ENCODE measurements at regions of chr7 and their contacts with region 1.

Region 1: GRCh38 chr7:2037808-2038522 is 194.8 kb downstream of the MAD1L1 start:
- DNase-seq: peak in 4 of 9 experiments; percentile 30 to 71 (median 54)
- ATAC-seq: peak; percentile 36
- H3K4me3 ChIP-seq: peak overlapping the region; percentile 49 to 70
- H3K4me3 Mint-ChIP-seq: peak overlapping the region; percentile 89
- H3K27ac ChIP-seq: peak overlapping the region; percentile 55 to 66
- H3K27ac Mint-ChIP-seq: peak overlapping the region; percentile 97
- H3K4me1 ChIP-seq: peaks cover 38% of the 10 kb centered on the region
- H3K4me1 Mint-ChIP-seq: peaks cover 60% of the 10 kb centered on the region
- H3K27me3 ChIP-seq: no peaks in the 10 kb centered on the region
- H3K27me3 Mint-ChIP-seq: no peaks in the 10 kb centered on the region
- CTCF ChIP-seq: no peak

Region 2: GRCh38 chr7:1925349-1925748 is 112.6 kb before region 1 on chr7:
- CTCF ChIA-PET with region 1: interaction called, 3 read pairs
- POLR2A ChIA-PET with region 1: no interaction called
- intact Hi-C with region 1: loop called (anchors 1 to 2 kb)
- DNase-seq: peak in 3 of 9 experiments; percentile 28 to 38 (median 36)
- ATAC-seq: no peak
- H3K4me3 ChIP-seq: no peak overlapping the region
- H3K4me3 Mint-ChIP-seq: peak overlapping the region; percentile 64
- H3K27ac ChIP-seq: peak overlapping the region; percentile 51 to 56
- H3K27ac Mint-ChIP-seq: peak overlapping the region; percentile 89
- H3K4me1 ChIP-seq: peaks cover 82% of the 10 kb centered on the region
- H3K4me1 Mint-ChIP-seq: peaks cover 77% of the 10 kb centered on the region
- H3K27me3 ChIP-seq: no peaks in the 10 kb centered on the region
- H3K27me3 Mint-ChIP-seq: no peaks in the 10 kb centered on the region
- CTCF ChIP-seq: no peak

Region 3: DNA sequence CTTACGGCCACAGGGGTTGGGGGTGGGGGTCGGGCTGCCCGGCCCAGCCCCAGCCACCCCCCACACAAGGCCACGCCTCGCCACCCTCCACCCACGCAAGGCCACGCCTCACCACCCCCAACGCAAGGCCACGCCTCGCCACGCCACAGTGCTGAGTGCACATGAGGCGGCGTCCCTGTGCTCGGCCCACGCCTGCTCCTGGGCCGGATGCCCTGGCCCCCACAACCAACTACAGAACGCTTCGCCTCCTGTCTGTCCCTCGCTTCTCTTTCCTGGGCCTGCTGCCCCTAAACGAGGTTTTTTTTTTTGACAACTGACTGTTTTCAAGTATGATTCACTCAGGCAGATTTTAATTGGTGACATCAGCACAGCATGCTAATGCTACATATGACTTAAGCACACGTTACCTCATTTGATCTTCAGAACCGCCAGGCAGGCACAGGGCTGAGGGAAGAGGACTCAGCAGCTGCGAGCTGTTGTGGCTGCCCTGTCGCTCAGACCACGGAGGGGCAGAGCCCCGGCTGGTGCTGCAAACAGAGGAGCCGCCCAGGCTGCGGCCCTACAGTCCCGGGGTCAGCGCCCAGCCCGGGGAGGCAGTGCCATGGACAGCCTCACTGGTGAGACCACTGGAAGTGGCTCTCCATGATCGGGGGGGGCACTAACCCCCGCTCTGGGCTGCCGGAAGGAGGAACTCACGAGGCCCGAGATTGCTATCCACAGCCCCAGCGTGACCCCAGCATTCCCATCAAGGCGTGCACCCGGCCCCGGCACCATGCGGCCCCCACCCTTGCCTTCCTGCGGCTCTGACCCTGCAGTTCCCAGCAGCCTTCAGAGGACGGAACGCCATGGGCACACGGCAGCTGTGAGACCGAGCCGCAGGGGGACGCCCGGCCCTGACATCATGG is 18.1 kb before region 1 on chr7:
- CTCF ChIA-PET with region 1: no interaction called
- POLR2A ChIA-PET with region 1: no interaction called
- intact Hi-C with region 1: loop called in 1 of 2 experiments (anchors 1 kb)
- DNase-seq: peak in 6 of 9 experiments; percentile 25 to 81 (median 64)
- ATAC-seq: peak; percentile 92
- H3K4me3 ChIP-seq: peak overlapping the region; percentile 19 to 26
- H3K4me3 Mint-ChIP-seq: peak overlapping the region; percentile 69
- H3K27ac ChIP-seq: peak overlapping the region in 1 of 2 experiments; percentile 18
- H3K27ac Mint-ChIP-seq: peak overlapping the region; percentile 81
- H3K4me1 ChIP-seq: peaks cover 19% of the 10 kb centered on the region
- H3K4me1 Mint-ChIP-seq: peaks cover 23% of the 10 kb centered on the region
- H3K27me3 ChIP-seq: no peaks in the 10 kb centered on the region
- H3K27me3 Mint-ChIP-seq: no peaks in the 10 kb centered on the region
- CTCF ChIP-seq: no peak

Region 4: GRCh38 chr7:2082139-2082998 is 44.4 kb after region 1 on chr7:
- CTCF ChIA-PET with region 1: no interaction called
- POLR2A ChIA-PET with region 1: no interaction called
- intact Hi-C with region 1: loop called in 1 of 2 experiments (anchors 5 kb)
- DNase-seq: no peak
- ATAC-seq: no peak
- H3K4me3 ChIP-seq: no peak overlapping the region
- H3K4me3 Mint-ChIP-seq: no peak overlapping the region
- H3K27ac ChIP-seq: no peak overlapping the region
- H3K27ac Mint-ChIP-seq: peak overlapping the region; percentile 61
- H3K4me1 ChIP-seq: peaks cover 31% of the 10 kb centered on the region
- H3K4me1 Mint-ChIP-seq: peaks cover 37% of the 10 kb centered on the region
- H3K27me3 ChIP-seq: no peaks in the 10 kb centered on the region
- H3K27me3 Mint-ChIP-seq: no peaks in the 10 kb centered on the region
- CTCF ChIP-seq: no peak